Heart right ventricle (tissue), 16 donors: ENCODE measurements at regions of chr2 and their contacts with region 1.

Region 1: GRCh38 chr2:74198461-74199274 is at the start of gene MTHFD2:
- DNase-seq: peak; percentile 86 to 90
- ATAC-seq: peak; percentile 93 to 97 (median 96)
- H3K4me3 ChIP-seq: peak within 1 kb of the TSS; percentile 60 to 88 (median 76)
- H3K27ac ChIP-seq: peak within 1 kb of the TSS; percentile 51 to 97 (median 88)
- H3K4me1 ChIP-seq: peaks cover 0 to 48% (median 28%) of the 10 kb centered on the region in 9 donors
- H3K27me3 ChIP-seq: no peaks in the 10 kb centered on the region
- CTCF ChIP-seq: peak; percentile 53 to 88 (median 78)
- total RNA-seq, gene MTHFD2: 12.4 to 32.6 (median 19.0) TPM

Region 2: DNA sequence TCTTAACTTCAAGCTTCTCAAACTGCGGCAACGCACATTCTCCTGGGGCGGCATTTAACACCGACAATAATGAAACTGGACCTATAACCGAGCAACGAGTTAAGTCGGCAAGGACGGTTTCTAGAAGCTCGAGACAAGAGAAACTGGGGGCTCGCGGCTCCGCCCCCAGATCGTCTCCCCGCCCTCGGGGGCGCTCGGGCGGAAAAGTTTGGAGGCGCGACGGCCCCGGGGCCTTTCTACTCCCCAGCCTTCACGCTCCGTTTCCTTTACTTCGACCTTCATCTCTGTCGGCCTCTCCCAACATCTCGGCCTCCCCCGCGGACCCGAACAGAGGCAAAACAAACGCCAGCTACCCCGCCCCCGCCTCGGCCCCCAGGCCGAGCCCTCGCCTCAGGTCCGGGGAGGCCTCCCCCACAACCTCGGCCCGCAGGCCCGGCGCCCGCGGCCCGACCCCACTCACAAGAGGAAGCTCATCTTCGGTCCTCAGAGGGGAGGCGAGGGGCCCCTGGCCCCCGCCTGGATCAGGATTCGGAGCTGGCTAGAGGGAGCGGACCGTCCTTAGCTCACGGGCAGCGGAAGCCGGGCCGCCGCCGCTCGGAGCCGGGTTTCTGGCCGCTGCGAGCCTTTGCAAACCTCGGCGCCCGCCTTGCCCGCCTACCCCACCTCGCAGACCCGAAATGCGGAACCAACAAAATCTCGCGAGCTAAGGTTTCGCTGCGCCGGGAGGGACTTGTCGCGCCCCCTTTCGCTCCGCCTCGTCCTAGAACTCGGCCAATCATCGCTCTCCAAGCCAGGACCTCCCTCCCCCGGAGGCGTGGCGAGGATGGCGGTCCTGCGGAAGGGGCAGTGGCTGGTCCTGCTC is 20.2 kb before region 1 on chr2 and contains the start of gene MOB1A:
- intact Hi-C with region 1: loop called in 1 of 10 experiments (anchors 2 kb)
- DNase-seq: peak; percentile 98 to 99
- ATAC-seq: peak; percentile 98 to 100 (median 99)
- H3K4me3 ChIP-seq: peak within 1 kb of the TSS; percentile 75 to 95 (median 88)
- H3K27ac ChIP-seq: peak within 1 kb of the TSS; percentile 82 to 97 (median 94)
- H3K4me1 ChIP-seq: peaks cover 3 to 66% (median 33%) of the 10 kb centered on the region in 9 donors
- H3K27me3 ChIP-seq: no peaks in the 10 kb centered on the region
- CTCF ChIP-seq: peak in 1 of 9 donors; percentile 10
- total RNA-seq, gene MOB1A: 45.8 to 75.0 (median 58.2) TPM